ENCODE measurements at regions of chr14 and their contacts with region 1.

Region 1: GRCh38 chr14:60184146-60184904 is 19.1 kb upstream of the DHRS7 start:
- DNase-seq: peak; percentile 60

Region 2: GRCh38 chr14:60064491-60065072 is 119.7 kb before region 1 on chr14:
- in situ Hi-C with region 1: loop called (anchors 10 kb)
- DNase-seq: peak; percentile 35

Measured in KBM-7 (cell line).